Activated naive CD4-positive, alpha-beta T cell treated with anti-CD3 and anti-CD28 coated beads for 36 hours (primary cell): ENCODE measurements at regions of chr9 and their contacts with region 1.

Region 1: DNA sequence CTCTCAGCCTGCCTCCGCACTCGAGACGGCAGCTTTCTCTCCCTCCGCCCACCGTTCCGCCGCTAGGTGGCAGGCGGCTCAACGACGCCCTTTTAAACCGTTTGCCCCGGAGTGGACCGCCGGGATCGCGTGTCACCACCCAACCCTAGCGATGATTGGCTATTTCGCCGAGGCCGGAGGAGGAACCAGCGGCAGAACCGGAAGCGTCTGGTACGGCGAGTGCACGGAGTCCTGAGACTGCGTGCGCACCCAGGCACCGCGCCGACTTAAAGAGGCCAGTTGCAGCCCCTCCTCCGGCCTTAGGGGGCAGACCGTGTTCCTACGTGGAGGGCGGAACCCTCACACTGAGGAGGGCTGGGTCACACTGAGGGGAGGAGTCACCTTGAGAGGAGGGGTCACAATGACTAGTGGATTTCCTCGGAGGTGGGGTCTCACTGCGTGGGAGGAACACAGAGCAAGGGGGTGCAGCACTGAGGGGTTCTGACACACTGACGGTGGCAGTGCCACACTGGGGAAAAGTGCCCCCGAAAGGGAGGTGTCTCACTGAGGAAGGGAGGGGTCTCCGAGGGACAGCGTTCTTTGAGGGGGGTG is 980 bp upstream of the TESK1 start:
- DNase-seq: peak; percentile 100
- H3K4me3 Mint-ChIP-seq: peak overlapping the region; percentile 98
- H3K27ac Mint-ChIP-seq: peak overlapping the region; percentile 97
- H3K4me1 Mint-ChIP-seq: peaks cover 27% of the 10 kb centered on the region
- H3K27me3 Mint-ChIP-seq: no peaks in the 10 kb centered on the region

Region 2: GRCh38 chr9:35079426-35080341 is 524.4 kb before region 1 on chr9 and contains the start of gene FANCG:
- CTCF ChIA-PET with region 1: no interaction called
- intact Hi-C with region 1: loop called (anchors 1 kb)
- DNase-seq: peak; percentile 92
- H3K4me3 Mint-ChIP-seq: peak within 1 kb of the TSS; percentile 94
- H3K27ac Mint-ChIP-seq: peak within 1 kb of the TSS; percentile 98
- H3K4me1 Mint-ChIP-seq: peaks cover 19% of the 10 kb centered on the region
- H3K27me3 Mint-ChIP-seq: no peaks in the 10 kb centered on the region
- total RNA-seq, gene FANCG: 109 to 118 TPM

Region 3: GRCh38 chr9:35500130-35500748 is 103.8 kb before region 1 on chr9:
- CTCF ChIA-PET with region 1: no interaction called
- intact Hi-C with region 1: loop called (anchors 5 kb)
- DNase-seq: no peak
- H3K4me3 Mint-ChIP-seq: no peak overlapping the region
- H3K27ac Mint-ChIP-seq: no peak overlapping the region
- H3K4me1 Mint-ChIP-seq: peaks cover 16% of the 10 kb centered on the region
- H3K27me3 Mint-ChIP-seq: no peaks in the 10 kb centered on the region

Region 4: DNA sequence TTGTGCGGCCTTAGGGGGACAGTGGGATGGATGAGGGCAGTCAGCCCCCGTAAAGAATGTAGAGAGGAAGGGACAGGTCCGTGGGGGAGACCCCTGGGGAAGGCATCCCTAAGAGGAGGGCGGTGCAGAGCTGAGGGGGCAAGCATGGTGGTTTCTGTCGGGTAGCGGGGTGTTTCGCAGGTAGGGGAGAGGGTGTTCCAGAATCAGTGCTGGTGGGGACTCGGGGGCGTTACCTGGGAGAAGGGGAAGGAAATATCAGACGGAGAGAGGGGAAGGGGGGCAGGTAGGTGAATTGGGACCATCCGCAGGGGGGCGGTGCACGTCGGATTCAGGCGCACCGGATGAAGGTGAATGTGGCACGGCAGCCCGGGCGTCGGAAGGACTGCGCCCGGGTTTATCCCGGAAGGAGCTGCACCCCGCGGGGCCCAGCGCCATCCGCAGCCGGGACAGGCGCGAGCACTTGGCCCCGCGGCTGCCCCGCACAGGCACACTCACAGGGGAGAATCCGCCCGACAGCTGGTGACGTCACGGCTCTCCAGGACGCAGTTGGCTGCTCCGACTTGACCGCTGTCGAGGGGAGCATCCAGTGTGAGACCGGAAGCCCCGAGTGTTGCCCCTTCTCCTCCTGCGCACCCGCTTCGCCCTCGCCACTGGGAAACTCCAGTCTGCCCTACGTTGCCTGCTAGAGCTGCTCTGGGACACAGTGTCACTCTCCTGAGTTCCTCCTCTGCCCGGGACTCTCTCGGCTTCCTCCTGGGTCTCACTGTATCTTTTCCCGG is 12.8 kb after region 1 on chr9:
- CTCF ChIA-PET with region 1: interaction called, 7 read pairs
- intact Hi-C with region 1: loop called (anchors 1 kb)
- DNase-seq: peak; percentile 79
- H3K4me3 Mint-ChIP-seq: peak overlapping the region; percentile 79
- H3K27ac Mint-ChIP-seq: peak overlapping the region; percentile 47
- H3K4me1 Mint-ChIP-seq: peaks cover 28% of the 10 kb centered on the region
- H3K27me3 Mint-ChIP-seq: no peaks in the 10 kb centered on the region

Region 5: DNA sequence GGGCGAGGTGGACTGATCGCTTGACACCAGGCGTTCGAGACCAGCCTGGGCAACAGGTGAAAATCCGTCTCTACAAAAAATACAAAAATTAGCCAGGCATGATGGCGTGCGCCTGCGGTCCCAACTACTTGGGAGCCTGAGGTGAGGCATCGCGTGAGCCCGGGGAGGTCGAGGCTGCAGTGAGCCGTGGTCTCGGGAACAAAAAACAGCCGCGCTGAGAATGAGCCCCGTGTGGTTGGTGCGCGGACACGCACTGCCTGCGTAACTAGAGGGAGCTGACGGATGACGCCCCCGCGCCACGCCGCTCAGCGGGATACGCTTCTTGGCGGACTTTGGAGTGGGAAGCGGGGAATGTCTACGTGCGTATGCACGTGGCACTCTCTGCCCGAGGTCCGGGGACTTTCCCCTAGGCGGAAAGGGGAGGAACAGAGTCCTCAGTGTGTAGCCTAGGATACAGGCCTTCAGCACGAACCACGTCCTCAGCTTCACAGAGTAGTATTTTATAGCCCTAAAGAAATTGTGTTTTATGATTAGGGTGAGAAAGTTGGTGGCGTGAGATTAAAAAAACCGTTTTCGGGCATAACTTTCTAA is 53.6 kb after region 1 on chr9 and contains the start of gene RMRP:
- CTCF ChIA-PET with region 1: interaction called, 6 read pairs
- intact Hi-C with region 1: loop called (anchors 1 kb)
- DNase-seq: peak; percentile 93
- H3K4me3 Mint-ChIP-seq: peak within 1 kb of the TSS; percentile 84
- H3K27ac Mint-ChIP-seq: peak within 1 kb of the TSS; percentile 94
- H3K4me1 Mint-ChIP-seq: peaks cover 60% of the 10 kb centered on the region
- H3K27me3 Mint-ChIP-seq: peaks cover 3% of the 10 kb centered on the region
- total RNA-seq, gene RMRP: 7,381 to 12,571 TPM

Region 6: GRCh38 chr9:35814841-35815543 is 210.9 kb after region 1 on chr9 and contains the start of gene HINT2:
- CTCF ChIA-PET with region 1: no interaction called
- intact Hi-C with region 1: loop called (anchors 1 kb)
- DNase-seq: peak; percentile 98
- H3K4me3 Mint-ChIP-seq: peak within 1 kb of the TSS; percentile 92
- H3K27ac Mint-ChIP-seq: peak within 1 kb of the TSS; percentile 97
- H3K4me1 Mint-ChIP-seq: peaks cover 28% of the 10 kb centered on the region
- H3K27me3 Mint-ChIP-seq: no peaks in the 10 kb centered on the region
- total RNA-seq, gene HINT2: 61.0 to 68.3 TPM